ENCODE measurements at regions of chr4 and their contacts with region 1.

Region 1: GRCh38 chr4:168917138-168917779 is 92.8 kb downstream of the CBR4 start:
- DNase-seq: no peak
- ATAC-seq: no peak
- H3K4me3 ChIP-seq: no peak overlapping the region
- H3K27ac ChIP-seq: peak overlapping the region in 2 of 12 donors; percentile 8 to 49
- H3K4me1 ChIP-seq: peaks cover 0 to 20% (median 2%) of the 10 kb centered on the region in 12 donors
- H3K27me3 ChIP-seq: no peaks in the 10 kb centered on the region
- CTCF ChIP-seq: peak; percentile 36 to 73 (median 60)
- POLR2A ChIP-seq: no peak

Region 2: GRCh38 chr4:168537571-168537970 is 379.7 kb before region 1 on chr4:
- intact Hi-C with region 1: no loop called
- DNase-seq: no peak
- ATAC-seq: no peak
- H3K4me3 ChIP-seq: no peak overlapping the region
- H3K27ac ChIP-seq: no peak overlapping the region
- H3K4me1 ChIP-seq: peaks cover 0 to 28% (median 8%) of the 10 kb centered on the region in 12 donors
- H3K27me3 ChIP-seq: no peaks in the 10 kb centered on the region
- CTCF ChIP-seq: no peak
- POLR2A ChIP-seq: no peak

Region 3: GRCh38 chr4:168847771-168848511 is 69.3 kb before region 1 on chr4:
- intact Hi-C with region 1: loop called in 1 of 10 experiments (anchors 5 kb)
- DNase-seq: no peak
- ATAC-seq: peak in 3 of 4 donors; percentile 44 to 64 (median 61)
- H3K4me3 ChIP-seq: peak overlapping the region in 6 of 12 donors; percentile 3 to 39 (median 18)
- H3K27ac ChIP-seq: peak overlapping the region; percentile 5 to 97 (median 66)
- H3K4me1 ChIP-seq: peaks cover 0 to 98% (median 51%) of the 10 kb centered on the region in 12 donors
- H3K27me3 ChIP-seq: no peaks in the 10 kb centered on the region
- CTCF ChIP-seq: no peak
- POLR2A ChIP-seq: no peak

Region 4: DNA sequence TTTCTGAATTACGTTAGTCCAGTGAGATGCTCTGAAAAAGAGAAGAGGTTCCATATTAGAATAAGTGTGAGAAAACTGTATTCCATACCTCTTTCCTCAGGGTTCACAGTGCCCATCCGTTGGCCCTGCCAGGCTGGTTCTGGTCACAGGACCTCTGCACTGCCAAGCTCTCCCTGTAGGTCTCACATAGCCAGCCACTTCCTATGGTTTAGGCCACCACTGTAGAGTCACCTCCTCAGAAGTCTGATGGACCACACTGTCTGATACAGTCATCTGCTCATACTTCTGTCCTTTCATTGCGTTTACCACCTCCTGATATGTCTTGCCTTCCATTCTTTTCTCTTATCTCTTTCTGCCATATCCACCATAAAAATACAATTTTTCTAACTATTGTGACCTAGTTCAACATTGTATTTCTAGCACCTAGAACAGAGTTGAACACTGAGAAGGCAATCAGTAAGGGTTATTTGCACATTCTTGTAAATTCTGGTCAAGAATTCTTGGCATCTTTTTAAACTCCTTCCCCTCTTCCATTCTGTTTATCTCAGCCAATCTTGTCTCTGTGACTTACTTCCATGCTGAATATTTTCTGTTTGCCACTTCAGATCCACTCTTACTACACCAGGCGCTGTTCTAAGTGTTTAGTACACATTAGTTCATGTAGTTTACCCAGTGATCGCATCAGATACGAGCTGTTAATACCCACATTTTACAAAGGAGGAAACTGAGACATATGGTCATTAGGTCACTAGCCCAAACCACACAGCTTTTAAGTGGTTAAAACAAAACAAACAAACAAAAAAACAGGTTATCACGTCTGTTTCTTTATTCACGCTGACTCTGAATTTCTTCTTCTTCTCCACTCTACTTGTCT is 32.8 kb before region 1 on chr4:
- intact Hi-C with region 1: loop called in 1 of 10 experiments (anchors 2 kb)
- DNase-seq: no peak
- ATAC-seq: peak in 1 of 4 donors; percentile 13
- H3K4me3 ChIP-seq: no peak overlapping the region
- H3K27ac ChIP-seq: peak overlapping the region in 2 of 12 donors; percentile 3 to 6
- H3K4me1 ChIP-seq: peaks cover 0 to 80% (median 40%) of the 10 kb centered on the region in 12 donors
- H3K27me3 ChIP-seq: no peaks in the 10 kb centered on the region
- CTCF ChIP-seq: no peak
- POLR2A ChIP-seq: no peak

Measured in heart left ventricle (tissue), 16 donors.